Right ventricle myocardium superior (tissue), 1 donor: ENCODE measurements at regions of chr11 and their contacts with region 1.

Region 1: DNA sequence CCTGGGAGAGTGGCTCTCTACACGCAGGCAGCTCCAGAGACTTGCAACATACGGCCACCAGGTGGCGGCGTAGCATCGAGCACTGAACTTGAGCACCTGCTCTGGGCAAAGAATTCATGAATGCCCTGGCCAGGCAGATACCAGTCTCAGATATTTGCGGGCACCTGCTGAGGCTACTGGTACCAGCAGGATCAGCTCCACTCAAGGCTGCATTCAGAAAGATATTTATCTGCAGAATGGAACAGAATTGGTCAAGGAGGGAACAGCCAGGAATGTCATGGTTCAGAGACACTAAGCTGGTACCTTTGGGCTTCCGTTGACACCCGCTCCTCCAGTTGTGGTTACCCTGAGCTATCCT is 10.8 kb upstream of the CCDC86 start:
- DNase-seq: peak; percentile 93
- ATAC-seq: peak; percentile 96

Region 2: GRCh38 chr11:60899046-60899936 is 68.2 kb after region 1 on chr11:
- intact Hi-C with region 1: loop called (anchors 5 kb)
- DNase-seq: no peak
- ATAC-seq: peak; percentile 69

Region 3: GRCh38 chr11:61129639-61130523 is 298.8 kb after region 1 on chr11:
- intact Hi-C with region 1: loop called (anchors 5 kb)
- DNase-seq: peak; percentile 91
- ATAC-seq: peak; percentile 86

Region 4: GRCh38 chr11:61187505-61188130 is 356.5 kb after region 1 on chr11:
- intact Hi-C with region 1: loop called (anchors 5 kb)
- DNase-seq: peak; percentile 83
- ATAC-seq: peak; percentile 80